Left cardiac atrium (tissue), 4 donors: ENCODE measurements at regions of chrX and their contacts with region 1.

Region 1: DNA sequence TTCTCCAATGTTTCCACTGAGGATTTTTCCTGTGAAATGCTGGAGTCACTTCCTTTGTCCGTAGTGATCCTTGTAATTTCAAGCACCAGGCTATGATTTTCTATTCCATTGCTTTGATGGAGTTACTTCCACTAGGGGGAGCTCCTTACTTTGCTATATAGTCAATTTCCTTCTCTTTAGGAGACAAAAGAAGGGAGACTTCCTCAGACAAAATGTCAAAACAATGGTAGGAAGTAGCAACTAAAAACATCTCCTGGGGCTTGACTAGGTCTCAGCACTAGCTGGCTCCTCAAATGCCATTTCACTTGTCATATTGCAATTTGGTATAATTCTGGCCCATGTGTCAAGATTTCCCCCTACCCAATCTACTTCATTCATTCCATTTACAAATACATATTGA is 24.1 kb downstream of the ZCCHC12 start:
- DNase-seq: no peak
- ATAC-seq: peak; percentile 35 to 55

Region 2: GRCh38 chrX:118961866-118962560 is 114.3 kb after region 1 on chrX:
- intact Hi-C with region 1: no loop called
- DNase-seq: no peak
- ATAC-seq: no peak

Region 3: DNA sequence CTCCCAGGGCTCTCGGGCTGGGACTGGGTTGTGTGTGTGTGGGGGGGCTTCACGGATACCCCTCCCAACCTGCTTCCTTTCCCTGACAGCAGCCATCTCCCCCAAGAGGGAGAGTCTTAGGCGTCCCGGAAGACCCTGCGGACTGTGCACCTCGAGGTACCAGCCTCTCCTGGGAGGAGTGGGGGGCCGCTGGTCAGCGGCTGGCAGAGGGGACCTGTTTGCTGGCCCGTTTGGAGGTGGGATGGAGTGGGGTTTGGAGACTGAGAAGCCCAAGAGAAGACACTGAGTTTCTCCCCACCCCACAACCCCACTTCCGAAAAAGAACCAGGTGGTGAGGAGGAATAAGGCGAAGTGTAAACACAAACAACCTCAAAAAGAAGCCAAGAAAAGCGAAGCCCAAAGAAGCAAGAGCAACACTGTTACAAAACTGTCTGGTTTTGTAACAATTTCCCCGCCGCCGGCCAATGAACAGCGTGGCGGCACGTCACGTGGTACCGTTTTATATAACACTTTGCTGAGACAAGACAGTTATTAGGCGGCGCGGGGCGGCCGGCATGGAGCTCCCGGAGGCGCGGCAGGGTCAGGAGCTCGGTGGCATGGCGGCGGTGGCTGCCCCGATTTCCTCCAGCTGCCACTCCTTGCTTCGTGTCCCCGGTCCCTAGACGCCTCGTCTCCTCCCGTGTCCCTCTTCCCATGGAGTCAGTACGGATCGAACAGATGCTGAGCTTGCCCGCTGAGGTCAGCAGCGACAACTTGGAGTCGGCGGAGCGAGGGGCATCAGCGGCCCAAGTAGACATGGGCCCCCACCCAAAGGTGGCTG is 126.6 kb after region 1 on chrX and contains the start of gene LONRF3:
- intact Hi-C with region 1: loop called in 1 of 2 experiments (anchors 10 kb)
- DNase-seq: peak; percentile 83
- ATAC-seq: peak; percentile 74 to 80
- total RNA-seq, gene LONRF3: 3.9 to 5.5 TPM

Region 4: GRCh38 chrX:119004920-119005524 is 157.3 kb after region 1 on chrX:
- intact Hi-C with region 1: loop called (anchors 2 to 10 kb)
- DNase-seq: peak; percentile 43
- ATAC-seq: peak; percentile 70 to 80

Region 5: GRCh38 chrX:119067023-119067739 is 219.5 kb after region 1 on chrX:
- intact Hi-C with region 1: loop called (anchors 2 to 5 kb)
- DNase-seq: peak; percentile 62
- ATAC-seq: peak; percentile 68 to 72